ENCODE measurements at regions of chr20 and their contacts with region 1.

Region 1: GRCh38 chr20:44153636-44154043 is 33.3 kb downstream of the JPH2 start:
- DNase-seq: no peak
- H3K4me3 ChIP-seq: no peak overlapping the region
- H3K4me3 Mint-ChIP-seq: no peak overlapping the region
- H3K27ac Mint-ChIP-seq: peak overlapping the region; percentile 3
- H3K4me1 ChIP-seq: peaks cover 33% of the 10 kb centered on the region
- H3K4me1 Mint-ChIP-seq: peaks cover 16% of the 10 kb centered on the region
- H3K27me3 ChIP-seq: no peaks in the 10 kb centered on the region
- H3K27me3 Mint-ChIP-seq: no peaks in the 10 kb centered on the region
- CTCF ChIP-seq: no peak

Region 2: DNA sequence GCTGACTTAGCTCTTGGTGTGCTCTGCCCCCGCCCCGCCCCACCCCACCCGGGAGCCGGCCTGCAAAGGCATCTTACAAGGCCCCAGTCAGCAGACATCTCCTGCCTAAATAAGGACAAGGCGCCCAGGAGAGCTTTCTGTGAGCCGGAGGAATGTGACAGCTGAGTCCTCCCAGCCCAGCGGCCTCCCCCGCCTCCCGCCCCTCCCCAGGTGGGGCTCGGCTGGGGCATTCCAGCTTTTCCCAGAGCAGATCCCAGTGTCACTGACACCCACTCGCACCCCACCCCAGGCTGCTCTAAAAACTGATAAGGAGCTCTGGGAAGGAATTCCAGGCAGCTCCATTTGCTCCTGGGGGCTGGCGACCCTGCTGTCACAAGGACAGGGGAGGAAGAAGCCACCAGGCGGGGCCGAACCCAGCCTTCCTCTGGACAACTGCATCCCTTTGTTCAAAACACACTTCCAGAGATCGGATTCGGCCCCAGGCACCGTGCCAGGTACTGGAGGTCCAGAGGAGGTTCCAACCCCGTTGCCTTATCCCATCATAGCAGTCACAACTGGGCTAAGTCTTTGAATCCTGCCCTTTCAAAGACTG is 16.3 kb before region 1 on chr20:
- CTCF ChIA-PET with region 1: interaction called, 10 read pairs
- POLR2A ChIA-PET with region 1: interaction called, 10 read pairs
- intact Hi-C with region 1: loop called (anchors 1 kb)
- DNase-seq: peak; percentile 92 to 98
- H3K4me3 ChIP-seq: no peak overlapping the region
- H3K4me3 Mint-ChIP-seq: peak overlapping the region; percentile 55
- H3K27ac Mint-ChIP-seq: peak overlapping the region; percentile 82
- H3K4me1 ChIP-seq: peaks cover 47% of the 10 kb centered on the region
- H3K4me1 Mint-ChIP-seq: peaks cover 39% of the 10 kb centered on the region
- H3K27me3 ChIP-seq: no peaks in the 10 kb centered on the region
- H3K27me3 Mint-ChIP-seq: no peaks in the 10 kb centered on the region
- CTCF ChIP-seq: peak in 1 of 2 experiments; percentile 13

Region 3: DNA sequence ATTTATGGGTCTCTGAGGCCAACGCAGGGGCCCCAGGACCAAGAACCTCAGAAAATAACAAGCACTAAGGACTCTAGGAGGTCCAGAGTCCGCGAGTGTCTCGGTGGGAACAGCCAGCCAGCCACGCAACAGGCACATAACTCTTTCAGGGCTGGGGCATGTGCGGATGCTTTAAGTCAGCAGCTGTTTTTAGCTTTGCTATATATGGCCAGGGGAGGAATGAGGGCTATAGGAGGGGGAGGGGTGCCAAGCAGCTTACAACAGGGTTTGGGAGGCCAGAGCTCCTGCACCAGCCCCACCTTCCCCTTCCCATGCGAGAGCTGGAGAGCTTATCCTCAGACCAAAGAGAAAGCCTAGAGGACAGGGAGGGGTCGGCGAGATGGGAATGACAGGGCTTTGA is 27.2 kb after region 1 on chr20:
- CTCF ChIA-PET with region 1: no interaction called
- POLR2A ChIA-PET with region 1: interaction called, 3 read pairs
- intact Hi-C with region 1: loop called (anchors 2 kb)
- DNase-seq: peak; percentile 85 to 96
- H3K4me3 ChIP-seq: no peak overlapping the region
- H3K4me3 Mint-ChIP-seq: peak overlapping the region; percentile 2
- H3K27ac Mint-ChIP-seq: peak overlapping the region; percentile 2
- H3K4me1 ChIP-seq: peaks cover 49% of the 10 kb centered on the region
- H3K4me1 Mint-ChIP-seq: peaks cover 27% of the 10 kb centered on the region
- H3K27me3 ChIP-seq: no peaks in the 10 kb centered on the region
- H3K27me3 Mint-ChIP-seq: no peaks in the 10 kb centered on the region
- CTCF ChIP-seq: no peak

Region 4: DNA sequence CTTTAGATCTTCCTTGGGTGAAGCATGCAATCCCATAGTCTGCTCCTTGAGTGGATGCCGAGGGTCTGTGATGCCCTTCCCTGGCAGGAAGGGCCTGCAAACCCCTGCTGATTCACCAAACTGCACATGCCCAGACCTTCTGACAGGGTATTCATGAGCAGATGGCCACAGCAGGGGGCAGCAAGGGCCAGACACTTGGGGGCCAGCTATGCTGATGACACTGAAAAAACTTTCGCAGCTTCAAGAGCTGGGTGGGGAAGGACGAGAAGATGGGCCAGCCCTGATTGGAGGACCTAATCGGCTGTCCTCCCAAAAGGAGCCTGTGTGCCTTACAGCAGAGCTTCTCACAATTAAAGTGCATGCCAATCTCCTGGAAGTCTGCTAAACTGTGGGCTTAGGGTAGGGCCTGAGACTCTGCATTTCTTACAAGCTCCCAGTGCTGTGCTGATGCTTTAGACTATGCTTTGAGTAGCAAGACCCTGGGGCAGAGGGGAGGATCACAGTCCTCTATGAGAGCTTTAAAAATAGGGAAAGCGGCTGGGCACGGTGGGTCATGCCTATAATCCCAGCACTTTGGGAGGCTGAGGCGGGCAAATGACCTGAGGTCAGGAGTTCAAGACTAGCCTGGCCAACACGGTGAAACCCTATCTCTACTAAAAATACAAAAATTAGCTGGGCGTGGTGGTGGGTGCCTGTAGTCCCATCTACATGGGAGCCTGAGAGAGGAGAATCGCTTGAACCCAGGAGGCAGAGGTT is 78.3 kb after region 1 on chr20:
- CTCF ChIA-PET with region 1: no interaction called
- POLR2A ChIA-PET with region 1: no interaction called
- intact Hi-C with region 1: no loop called
- DNase-seq: peak; percentile 48 to 51
- H3K4me3 ChIP-seq: no peak overlapping the region
- H3K4me3 Mint-ChIP-seq: no peak overlapping the region
- H3K27ac Mint-ChIP-seq: no peak overlapping the region
- H3K4me1 ChIP-seq: no peaks in the 10 kb centered on the region
- H3K4me1 Mint-ChIP-seq: peaks cover 12% of the 10 kb centered on the region
- H3K27me3 ChIP-seq: no peaks in the 10 kb centered on the region
- H3K27me3 Mint-ChIP-seq: no peaks in the 10 kb centered on the region
- CTCF ChIP-seq: peak in 1 of 2 experiments; percentile 22

Region 5: GRCh38 chr20:44264287-44264686 is 110.6 kb after region 1 on chr20:
- CTCF ChIA-PET with region 1: no interaction called
- POLR2A ChIA-PET with region 1: no interaction called
- intact Hi-C with region 1: no loop called
- DNase-seq: peak; percentile 63 to 70
- H3K4me3 ChIP-seq: no peak overlapping the region
- H3K4me3 Mint-ChIP-seq: no peak overlapping the region
- H3K27ac Mint-ChIP-seq: no peak overlapping the region
- H3K4me1 ChIP-seq: no peaks in the 10 kb centered on the region
- H3K4me1 Mint-ChIP-seq: no peaks in the 10 kb centered on the region
- H3K27me3 ChIP-seq: no peaks in the 10 kb centered on the region
- H3K27me3 Mint-ChIP-seq: peaks cover 14% of the 10 kb centered on the region
- CTCF ChIP-seq: no peak

Measured in Caco-2 (cell line).